Calu3 (cell line): ENCODE measurements at regions of chr6 and their contacts with region 1.

Region 1: GRCh38 chr6:154509421-154510142 is 903 bp downstream of the CNKSR3 start:
- DNase-seq: peak; percentile 26
- H3K4me3 Mint-ChIP-seq: peak overlapping the region; percentile 86
- H3K27ac Mint-ChIP-seq: peak overlapping the region; percentile 70
- H3K4me1 Mint-ChIP-seq: peaks cover 26% of the 10 kb centered on the region
- H3K27me3 Mint-ChIP-seq: no peaks in the 10 kb centered on the region
- CTCF ChIP-seq: no peak

Region 2: GRCh38 chr6:154386848-154387717 is 122.5 kb before region 1 on chr6:
- CTCF ChIA-PET with region 1: no interaction called
- intact Hi-C with region 1: loop called (anchors 5 kb)
- DNase-seq: no peak
- H3K4me3 Mint-ChIP-seq: no peak overlapping the region
- H3K27ac Mint-ChIP-seq: no peak overlapping the region
- H3K4me1 Mint-ChIP-seq: peaks cover 16% of the 10 kb centered on the region
- H3K27me3 Mint-ChIP-seq: peaks cover 57% of the 10 kb centered on the region
- CTCF ChIP-seq: no peak

Region 3: GRCh38 chr6:154491567-154492443 is 17.8 kb before region 1 on chr6:
- CTCF ChIA-PET with region 1: no interaction called
- intact Hi-C with region 1: loop called (anchors 1 kb)
- DNase-seq: no peak
- H3K4me3 Mint-ChIP-seq: no peak overlapping the region
- H3K27ac Mint-ChIP-seq: no peak overlapping the region
- H3K4me1 Mint-ChIP-seq: no peaks in the 10 kb centered on the region
- H3K27me3 Mint-ChIP-seq: no peaks in the 10 kb centered on the region
- CTCF ChIP-seq: no peak

Region 4: DNA sequence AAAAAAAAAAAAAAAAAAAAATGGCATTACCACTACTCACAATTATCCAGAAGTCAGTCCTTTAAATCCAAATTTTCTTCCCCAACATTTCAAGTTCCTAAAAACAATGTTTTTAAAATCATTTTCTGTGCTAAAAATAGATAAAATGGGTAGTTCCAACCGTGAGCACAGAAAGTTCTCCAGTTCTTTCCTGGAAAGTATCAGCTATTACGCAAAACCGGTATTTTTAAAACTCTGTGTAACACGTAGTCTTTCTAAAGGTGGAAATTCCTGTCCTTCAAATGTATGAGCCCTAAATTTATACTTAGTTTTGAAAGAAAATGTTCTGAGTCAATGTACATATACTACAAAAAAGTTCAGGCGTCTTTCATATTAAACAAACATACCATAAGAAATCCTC is 140.1 kb after region 1 on chr6:
- CTCF ChIA-PET with region 1: no interaction called
- intact Hi-C with region 1: loop called (anchors 10 kb)
- DNase-seq: no peak
- H3K4me3 Mint-ChIP-seq: no peak overlapping the region
- H3K27ac Mint-ChIP-seq: no peak overlapping the region
- H3K4me1 Mint-ChIP-seq: peaks cover 12% of the 10 kb centered on the region
- H3K27me3 Mint-ChIP-seq: no peaks in the 10 kb centered on the region
- CTCF ChIP-seq: no peak